AG04450 (cell line): ENCODE measurements at regions of chr10 and their contacts with region 1.

Region 1: DNA sequence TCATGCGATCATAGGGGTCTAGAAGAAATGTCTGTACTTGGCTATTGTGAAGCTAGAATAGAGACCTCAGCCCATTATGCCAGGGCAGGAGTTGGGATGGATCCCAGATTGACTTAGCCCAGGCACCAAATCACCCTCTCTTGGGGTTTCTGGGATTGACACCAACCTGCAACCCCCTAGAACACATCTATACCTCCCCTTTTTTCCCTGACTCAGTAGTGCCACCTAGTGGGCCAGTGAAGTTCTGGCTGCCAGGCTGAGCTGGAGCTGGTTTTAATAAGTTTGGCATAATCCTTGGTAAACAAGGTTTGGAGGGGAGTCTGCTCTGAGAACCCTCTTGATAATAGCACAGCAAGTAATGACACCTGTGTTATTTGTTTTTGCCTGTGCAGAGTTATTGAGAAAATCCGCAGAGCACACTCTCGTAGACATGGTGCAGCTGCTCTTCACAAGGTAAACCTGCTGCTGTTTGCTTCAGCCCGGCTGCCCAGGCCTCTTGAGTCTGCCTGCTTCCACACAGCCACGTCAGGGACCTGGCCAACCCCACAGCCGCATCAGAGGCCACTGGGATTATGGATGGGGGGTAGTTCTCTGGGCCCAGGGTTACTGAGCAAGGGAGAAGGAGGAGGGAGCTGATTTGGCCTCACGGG is 43.3 kb upstream of the NFKB2 start:
- DNase-seq: peak; percentile 20
- H3K4me3 ChIP-seq: no peak overlapping the region
- H3K27ac ChIP-seq: no peak overlapping the region
- H3K27me3 ChIP-seq: no peaks in the 10 kb centered on the region
- CTCF ChIP-seq: peak; percentile 98

Region 2: GRCh38 chr10:102245101-102245931 is 106.9 kb before region 1 on chr10 and contains the start of gene GBF1:
- CTCF ChIA-PET with region 1: interaction called, 38 read pairs
- POLR2A ChIA-PET with region 1: interaction called, 8 read pairs
- DNase-seq: peak; percentile 99
- H3K4me3 ChIP-seq: peak within 1 kb of the TSS; percentile 100
- H3K27ac ChIP-seq: peak within 1 kb of the TSS; percentile 83
- H3K27me3 ChIP-seq: peaks cover 6% of the 10 kb centered on the region
- CTCF ChIP-seq: no peak
- polyA plus RNA-seq, gene GBF1: 31.9 and 43.8 TPM in 2 replicates

Region 3: GRCh38 chr10:102268375-102268888 is 83.8 kb before region 1 on chr10:
- CTCF ChIA-PET with region 1: interaction called, 12 read pairs
- POLR2A ChIA-PET with region 1: no interaction called
- DNase-seq: no peak
- H3K4me3 ChIP-seq: no peak overlapping the region
- H3K27ac ChIP-seq: peak overlapping the region; percentile 48
- H3K27me3 ChIP-seq: no peaks in the 10 kb centered on the region
- CTCF ChIP-seq: no peak; the same call in 1 of the 2 replicates

Region 4: GRCh38 chr10:102322914-102323313 is 29.3 kb before region 1 on chr10:
- CTCF ChIA-PET with region 1: interaction called, 13 read pairs
- POLR2A ChIA-PET with region 1: no interaction called
- DNase-seq: no peak
- H3K4me3 ChIP-seq: no peak overlapping the region
- H3K27ac ChIP-seq: no peak overlapping the region
- H3K27me3 ChIP-seq: no peaks in the 10 kb centered on the region
- CTCF ChIP-seq: no peak

Region 5: DNA sequence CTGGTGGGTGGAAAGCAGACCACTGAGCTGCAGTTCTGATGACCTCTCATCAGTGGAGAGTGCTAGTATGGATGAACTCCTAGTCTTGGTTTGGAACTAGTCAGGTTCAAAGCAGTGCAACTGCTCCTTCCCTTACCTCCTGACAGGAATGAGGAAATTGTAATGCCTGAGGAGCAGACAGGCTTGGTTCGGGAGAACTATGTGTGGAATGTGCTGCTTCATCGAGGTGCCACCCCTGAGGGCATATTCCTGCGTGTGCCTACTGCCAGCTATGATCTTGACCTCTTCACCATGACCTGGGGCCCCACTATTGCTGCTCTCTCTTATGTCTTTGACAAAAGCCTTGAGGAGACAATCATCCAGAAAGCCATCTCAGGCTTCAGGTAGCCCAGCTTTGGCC is 15.9 kb after region 1 on chr10:
- CTCF ChIA-PET with region 1: interaction called, 44 read pairs
- POLR2A ChIA-PET with region 1: no interaction called
- DNase-seq: no peak
- H3K4me3 ChIP-seq: no peak overlapping the region
- H3K27ac ChIP-seq: no peak overlapping the region
- H3K27me3 ChIP-seq: no peaks in the 10 kb centered on the region
- CTCF ChIP-seq: no peak